ENCODE measurements at regions of chr12 and their contacts with region 1.

Region 1: GRCh38 chr12:56040963-56041551 is 661 bp upstream of the RPS26 start:
- DNase-seq: no peak
- H3K4me3 ChIP-seq: peak overlapping the region; percentile 33
- H3K4me3 Mint-ChIP-seq: peak overlapping the region; percentile 94 to 100 (median 98)
- H3K27ac ChIP-seq: peak overlapping the region; percentile 83
- H3K27ac Mint-ChIP-seq: peak overlapping the region; percentile 40 to 99 (median 96)
- H3K4me1 ChIP-seq: peaks cover 32% of the 10 kb centered on the region
- H3K4me1 Mint-ChIP-seq: peaks cover 42 to 55% (median 42%) of the 10 kb centered on the region in 3 donors
- H3K27me3 ChIP-seq: no peaks in the 10 kb centered on the region
- H3K27me3 Mint-ChIP-seq: peaks cover 0 to 6% of the 10 kb centered on the region in 2 donors

Region 2: DNA sequence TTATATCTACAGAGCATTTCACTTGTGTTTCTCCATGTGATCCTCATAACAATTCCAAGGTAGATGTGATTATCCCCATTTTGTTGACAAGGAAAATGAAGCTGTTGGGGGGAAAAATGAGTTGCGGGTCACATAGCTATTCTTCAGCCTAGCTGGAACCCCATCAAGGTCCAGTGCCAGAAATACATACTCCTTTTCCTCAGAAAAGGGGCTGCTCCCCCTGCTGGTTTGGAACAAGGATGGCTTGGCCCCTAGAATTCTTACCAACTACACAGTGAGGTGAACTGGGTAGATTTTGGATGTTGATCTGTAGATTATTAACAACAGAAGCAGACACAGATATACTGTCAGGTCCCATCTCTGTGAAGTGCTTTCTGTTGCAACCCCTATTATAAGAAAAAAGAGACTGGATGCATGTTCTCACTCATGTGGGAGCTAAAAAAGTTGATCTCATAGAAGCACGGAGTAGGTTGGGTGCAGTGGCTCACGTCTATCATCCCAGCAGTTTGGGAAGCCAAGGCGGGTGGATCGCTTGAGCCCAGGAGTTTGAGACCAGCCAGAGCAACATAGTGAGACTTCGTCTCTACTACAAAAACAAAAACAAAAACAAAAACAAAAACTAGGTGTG is 11.3 kb before region 1 on chr12:
- CTCF ChIA-PET with region 1: interaction called, 11 read pairs
- POLR2A ChIA-PET with region 1: no interaction called
- DNase-seq: peak in 2 of 5 donors; percentile 26 to 36
- H3K4me3 ChIP-seq: no peak overlapping the region
- H3K4me3 Mint-ChIP-seq: no peak overlapping the region
- H3K27ac ChIP-seq: no peak overlapping the region
- H3K27ac Mint-ChIP-seq: peak overlapping the region in 1 of 8 donors; percentile 45
- H3K4me1 ChIP-seq: no peaks in the 10 kb centered on the region
- H3K4me1 Mint-ChIP-seq: peaks cover 3 to 23% (median 7%) of the 10 kb centered on the region in 3 donors
- H3K27me3 ChIP-seq: no peaks in the 10 kb centered on the region
- H3K27me3 Mint-ChIP-seq: peaks cover 0 to 1% of the 10 kb centered on the region in 2 donors

Measured in CD8-positive, alpha-beta memory T cell (primary cell).